ENCODE measurements at regions of chr1 and their contacts with region 1.

Region 1: DNA sequence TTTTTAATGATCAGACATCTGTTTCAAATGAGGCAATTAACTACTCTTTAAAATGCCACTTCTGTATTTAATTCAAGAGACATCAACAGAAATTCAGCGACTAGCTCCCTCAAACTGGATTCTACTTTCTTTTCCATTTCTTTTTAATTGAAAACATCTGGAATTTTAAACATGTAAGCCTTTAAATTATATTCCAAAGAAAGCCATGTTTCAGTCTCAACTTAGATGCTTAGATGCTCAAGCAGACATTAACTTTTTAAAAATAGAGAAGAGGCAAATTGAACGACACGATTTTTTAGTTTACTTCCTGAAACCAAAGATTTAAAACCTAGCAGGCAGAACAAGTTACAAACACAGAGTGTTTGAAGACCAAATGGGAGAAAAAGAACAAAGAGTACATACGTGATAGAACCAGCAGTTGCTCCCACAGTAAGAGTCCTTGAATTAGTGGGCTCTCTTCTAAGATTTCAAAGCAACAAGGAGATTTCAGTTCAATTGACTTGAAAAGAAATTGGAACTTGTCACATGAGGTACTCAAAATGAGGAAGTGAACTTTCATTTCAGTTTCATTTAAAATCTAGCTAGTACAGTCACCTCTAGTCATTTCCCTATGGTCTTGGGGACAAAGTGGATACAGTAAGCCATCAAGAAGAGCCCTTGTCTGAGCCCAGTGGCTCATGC is at the start of gene CTSS:
- DNase-seq: peak in 6 of 9 donors; percentile 37 to 55 (median 43)
- ATAC-seq: peak; percentile 86
- H3K4me3 ChIP-seq: peak within 1 kb of the TSS; percentile 60
- H3K4me3 Mint-ChIP-seq: peak within 1 kb of the TSS; percentile 87 to 98 (median 93)
- H3K27ac ChIP-seq: peak within 1 kb of the TSS; percentile 82
- H3K27ac Mint-ChIP-seq: peak within 1 kb of the TSS; percentile 83 to 99 (median 96)
- H3K4me1 ChIP-seq: peaks cover 9 to 15% of the 10 kb centered on the region in 2 donors
- H3K4me1 Mint-ChIP-seq: peaks cover 36 to 68% (median 52%) of the 10 kb centered on the region in 7 donors
- H3K27me3 ChIP-seq: no peaks in the 10 kb centered on the region
- H3K27me3 Mint-ChIP-seq: peaks cover 0 to 8% (median 0%) of the 10 kb centered on the region in 5 donors
- total RNA-seq, gene CTSS: 91.1 to 1,020 (median 106) TPM

Region 2: DNA sequence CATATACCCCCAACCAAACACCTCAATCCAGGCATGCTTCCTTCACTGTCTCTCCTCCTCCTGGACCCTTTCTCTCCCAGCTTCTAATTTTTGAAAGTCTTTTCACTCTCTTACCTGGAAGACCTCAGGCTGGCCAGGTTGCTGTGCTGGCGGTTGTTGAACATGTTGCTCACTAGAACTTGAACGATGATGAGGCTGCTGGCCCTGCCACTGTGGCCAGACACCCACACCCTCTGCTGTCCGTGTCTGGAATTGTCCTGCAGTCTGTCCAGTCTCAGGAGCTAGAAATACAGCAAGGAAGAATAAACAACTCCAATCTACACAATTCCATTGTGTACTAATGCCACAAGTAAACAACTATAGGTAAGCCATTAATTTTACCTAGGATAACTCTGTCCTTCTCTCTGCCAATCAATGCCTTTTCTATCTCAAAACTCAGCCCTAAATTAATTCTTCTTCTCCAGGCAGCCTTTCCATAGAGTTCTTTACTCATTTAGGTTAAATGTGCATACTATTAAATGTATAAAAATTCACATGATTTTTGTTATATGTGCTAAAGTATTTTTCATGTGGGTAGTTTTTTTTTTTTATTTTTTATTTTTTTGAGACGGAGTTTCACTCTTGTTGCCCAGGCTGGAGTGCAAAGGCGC is 47.7 kb after region 1 on chr1:
- CTCF ChIA-PET with region 1: no interaction called
- POLR2A ChIA-PET with region 1: no interaction called
- intact Hi-C with region 1: loop called in 1 of 2 experiments (anchors 10 kb)
- DNase-seq: no peak
- ATAC-seq: peak; percentile 61
- H3K4me3 ChIP-seq: no peak overlapping the region
- H3K4me3 Mint-ChIP-seq: no peak overlapping the region
- H3K27ac ChIP-seq: no peak overlapping the region
- H3K27ac Mint-ChIP-seq: no peak overlapping the region
- H3K4me1 ChIP-seq: no peaks in the 10 kb centered on the region
- H3K4me1 Mint-ChIP-seq: peaks cover 1 to 7% (median 2%) of the 10 kb centered on the region in 7 donors
- H3K27me3 ChIP-seq: no peaks in the 10 kb centered on the region
- H3K27me3 Mint-ChIP-seq: no peaks in the 10 kb centered on the region

Region 3: DNA sequence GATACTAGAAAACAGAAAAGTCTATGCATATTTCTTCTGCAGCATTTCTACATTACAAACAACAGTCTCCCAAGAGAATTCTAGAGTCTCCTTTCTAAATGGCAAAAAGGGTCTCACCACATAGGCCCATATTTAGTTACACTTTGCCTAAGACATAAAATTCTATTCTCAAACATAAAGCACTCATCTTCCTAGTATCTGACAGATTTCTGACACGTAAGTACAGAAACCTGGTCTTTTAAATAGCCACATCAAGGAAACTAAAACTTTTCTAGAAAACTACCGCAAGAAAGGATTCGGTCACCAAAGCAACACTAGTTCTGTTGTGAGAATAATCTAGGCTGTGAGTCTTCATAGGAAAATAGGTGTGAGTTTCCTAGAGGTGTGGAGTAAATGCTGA is 76.2 kb after region 1 on chr1:
- CTCF ChIA-PET with region 1: no interaction called
- POLR2A ChIA-PET with region 1: no interaction called
- intact Hi-C with region 1: loop called in 1 of 2 experiments (anchors 5 kb)
- DNase-seq: peak in 7 of 9 donors; percentile 54 to 82 (median 70)
- ATAC-seq: peak; percentile 93
- H3K4me3 ChIP-seq: no peak overlapping the region
- H3K4me3 Mint-ChIP-seq: peak overlapping the region in 9 of 10 donors; percentile 10 to 66 (median 49)
- H3K27ac ChIP-seq: peak overlapping the region; percentile 63
- H3K27ac Mint-ChIP-seq: peak overlapping the region; percentile 49 to 94 (median 86)
- H3K4me1 ChIP-seq: peaks cover 0 to 29% of the 10 kb centered on the region in 2 donors
- H3K4me1 Mint-ChIP-seq: peaks cover 27 to 57% (median 49%) of the 10 kb centered on the region in 7 donors
- H3K27me3 ChIP-seq: no peaks in the 10 kb centered on the region
- H3K27me3 Mint-ChIP-seq: no peaks in the 10 kb centered on the region

Measured in naive thymus-derived CD4-positive, alpha-beta T cell (primary cell).